Activated CD8-positive, alpha-beta memory T cell treated with anti-CD3 and anti-CD28 coated beads, Interleukin-2, amount 10 ng/mL, durations not matched to agents 7 days and 5 days (primary cell): ENCODE measurements at regions of chr9 and their contacts with region 1.

Region 1: DNA sequence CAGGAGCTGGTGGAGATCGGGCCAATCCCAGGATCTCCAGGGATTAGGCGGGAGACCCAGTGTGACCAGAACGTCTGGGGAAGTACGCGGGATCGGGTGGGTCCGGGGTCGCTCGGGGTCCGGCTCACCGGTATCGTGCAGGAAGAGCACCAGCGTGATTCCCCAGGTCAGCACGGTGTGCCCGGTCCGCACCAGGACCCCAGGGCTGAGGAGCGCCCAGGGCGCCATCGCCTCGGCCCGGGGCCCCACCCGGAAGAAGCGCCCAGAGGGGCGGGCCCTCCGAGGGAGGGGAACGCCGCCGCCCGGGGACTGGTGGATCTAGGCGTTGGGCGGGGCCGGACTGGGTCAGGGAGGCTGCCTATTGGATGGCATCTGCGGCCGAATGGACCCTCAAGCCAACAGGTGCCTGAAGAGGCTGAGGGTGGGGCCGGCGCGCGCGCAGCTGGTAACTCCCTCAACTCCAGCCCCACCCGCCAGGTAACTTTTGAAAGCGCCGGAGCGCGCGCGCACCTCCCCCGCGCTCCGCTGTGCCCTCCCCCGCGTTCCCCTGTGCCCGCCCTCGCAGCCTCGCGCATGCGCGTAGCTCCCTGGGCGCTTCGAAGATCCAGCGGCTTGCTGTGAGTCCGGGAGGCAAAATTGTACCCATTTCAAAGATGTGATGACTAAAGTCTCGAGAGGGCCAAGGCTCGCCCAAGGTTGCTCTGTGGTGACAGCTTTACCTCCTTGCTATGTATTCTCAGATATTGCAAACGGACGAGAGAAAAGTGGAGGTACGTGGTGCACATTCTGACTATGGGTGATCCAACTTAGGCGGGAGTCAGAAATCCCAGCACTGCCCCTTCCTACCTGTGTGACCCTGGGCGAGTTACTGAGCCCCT is at the start of gene ZDHHC12:
- DNase-seq: peak; percentile 100
- ATAC-seq: peak; percentile 98
- H3K4me3 Mint-ChIP-seq: peak within 1 kb of the TSS; percentile 100
- H3K27ac Mint-ChIP-seq: peak within 1 kb of the TSS; percentile 88
- H3K4me1 Mint-ChIP-seq: peaks cover 39% of the 10 kb centered on the region
- H3K27me3 Mint-ChIP-seq: no peaks in the 10 kb centered on the region
- total RNA-seq, gene ZDHHC12: 67.8 to 90.0 TPM

Region 2: DNA sequence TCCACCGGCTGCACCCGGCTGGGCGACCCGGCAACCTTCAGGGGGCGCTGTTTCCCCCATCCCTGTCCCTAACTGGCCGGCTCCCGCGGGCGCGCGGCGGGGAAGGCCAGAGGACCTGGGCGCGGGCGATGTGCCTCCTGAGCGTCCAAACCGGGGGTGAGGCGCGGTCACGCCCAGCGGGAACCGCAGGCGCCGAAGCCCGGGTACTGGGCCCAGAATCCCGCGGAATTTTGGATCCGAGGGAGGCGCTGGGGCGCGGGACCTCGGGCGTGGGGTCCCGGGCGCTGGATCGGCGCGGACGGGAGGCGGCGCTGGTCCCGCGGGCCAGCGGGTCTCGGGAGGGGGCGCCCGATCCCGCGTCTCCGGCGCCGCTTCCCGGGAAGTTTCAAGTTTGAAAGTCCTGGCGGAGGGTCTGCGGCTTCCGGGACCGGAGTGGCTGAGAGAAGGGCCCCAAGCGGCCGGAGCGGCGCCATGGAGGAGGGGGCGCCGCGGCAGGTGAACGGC is 21.6 kb before region 1 on chr9 and contains the start of gene PKN3:
- CTCF ChIA-PET with region 1: interaction called, 10 read pairs
- DNase-seq: peak; percentile 92
- ATAC-seq: peak; percentile 93
- H3K4me3 Mint-ChIP-seq: peak within 1 kb of the TSS; percentile 75
- H3K27ac Mint-ChIP-seq: peak within 1 kb of the TSS; percentile 59
- H3K4me1 Mint-ChIP-seq: peaks cover 12% of the 10 kb centered on the region
- H3K27me3 Mint-ChIP-seq: no peaks in the 10 kb centered on the region
- total RNA-seq, gene PKN3: 8.1 to 9.1 TPM

Region 3: GRCh38 chr9:128712451-128713410 is 11.4 kb before region 1 on chr9:
- CTCF ChIA-PET with region 1: no interaction called
- DNase-seq: no peak
- ATAC-seq: no peak
- H3K4me3 Mint-ChIP-seq: no peak overlapping the region
- H3K27ac Mint-ChIP-seq: no peak overlapping the region
- H3K4me1 Mint-ChIP-seq: no peaks in the 10 kb centered on the region
- H3K27me3 Mint-ChIP-seq: no peaks in the 10 kb centered on the region

Region 4: GRCh38 chr9:128735373-128735772 is 11.3 kb after region 1 on chr9:
- CTCF ChIA-PET with region 1: interaction called, 10 read pairs
- DNase-seq: no peak
- ATAC-seq: no peak
- H3K4me3 Mint-ChIP-seq: no peak overlapping the region
- H3K27ac Mint-ChIP-seq: no peak overlapping the region
- H3K4me1 Mint-ChIP-seq: peaks cover 4% of the 10 kb centered on the region
- H3K27me3 Mint-ChIP-seq: no peaks in the 10 kb centered on the region

Region 5: GRCh38 chr9:128829477-128830251 is 105.6 kb after region 1 on chr9 and contains the start of gene SPOUT1:
- CTCF ChIA-PET with region 1: no interaction called
- DNase-seq: peak; percentile 96
- ATAC-seq: peak; percentile 98
- H3K4me3 Mint-ChIP-seq: peak within 1 kb of the TSS; percentile 97
- H3K27ac Mint-ChIP-seq: peak within 1 kb of the TSS; percentile 90
- H3K4me1 Mint-ChIP-seq: peaks cover 23% of the 10 kb centered on the region
- H3K27me3 Mint-ChIP-seq: no peaks in the 10 kb centered on the region
- total RNA-seq, gene SPOUT1: 83.3 to 104 TPM